Activated CD4-positive, alpha-beta memory T cell treated with anti-CD3 and anti-CD28 coated beads for 36 hours (primary cell): ENCODE measurements at regions of chrX and their contacts with region 1.

Region 1: GRCh38 chrX:72306851-72307645 is 1.3 kb upstream of the CITED1 start:
- DNase-seq: peak; percentile 20
- H3K4me3 Mint-ChIP-seq: peak overlapping the region; percentile 70
- H3K27ac Mint-ChIP-seq: no peak overlapping the region
- H3K4me1 Mint-ChIP-seq: peaks cover 29% of the 10 kb centered on the region
- H3K27me3 Mint-ChIP-seq: peaks cover 47% of the 10 kb centered on the region

Region 2: GRCh38 chrX:72349190-72349589 is 42.1 kb after region 1 on chrX:
- CTCF ChIA-PET with region 1: no interaction called
- POLR2A ChIA-PET with region 1: no interaction called
- intact Hi-C with region 1: loop called (anchors 5 kb)
- DNase-seq: peak; percentile 56
- H3K4me3 Mint-ChIP-seq: no peak overlapping the region
- H3K27ac Mint-ChIP-seq: peak overlapping the region; percentile 75
- H3K4me1 Mint-ChIP-seq: peaks cover 21% of the 10 kb centered on the region
- H3K27me3 Mint-ChIP-seq: no peaks in the 10 kb centered on the region

Region 3: DNA sequence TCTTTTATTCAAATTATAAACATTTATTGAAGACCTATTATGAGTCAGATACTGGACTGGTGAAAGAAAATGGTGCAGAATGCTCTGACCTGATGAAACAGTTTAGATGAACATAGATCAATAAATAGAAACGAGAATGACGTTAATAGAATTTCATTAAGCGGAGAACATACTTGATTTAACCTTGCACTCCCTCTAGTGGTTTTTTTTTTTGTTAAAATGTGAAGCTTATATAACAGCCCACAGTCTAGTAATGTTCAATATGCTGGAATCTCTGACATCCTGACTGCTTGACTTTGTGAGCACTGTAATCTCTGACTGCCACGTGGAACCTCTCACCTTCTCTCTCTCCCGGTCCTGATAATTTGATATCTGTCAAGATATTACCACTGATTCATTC is 233.3 kb after region 1 on chrX:
- CTCF ChIA-PET with region 1: no interaction called
- POLR2A ChIA-PET with region 1: no interaction called
- intact Hi-C with region 1: loop called (anchors 10 kb)
- DNase-seq: no peak
- H3K4me3 Mint-ChIP-seq: no peak overlapping the region
- H3K27ac Mint-ChIP-seq: no peak overlapping the region
- H3K4me1 Mint-ChIP-seq: peaks cover 4% of the 10 kb centered on the region
- H3K27me3 Mint-ChIP-seq: no peaks in the 10 kb centered on the region